ENCODE measurements at regions of chr12 and their contacts with region 1.

Region 1: GRCh38 chr12:108722992-108723766 is 8.1 kb downstream of the CORO1C start:
- DNase-seq: peak; percentile 94

Region 2: DNA sequence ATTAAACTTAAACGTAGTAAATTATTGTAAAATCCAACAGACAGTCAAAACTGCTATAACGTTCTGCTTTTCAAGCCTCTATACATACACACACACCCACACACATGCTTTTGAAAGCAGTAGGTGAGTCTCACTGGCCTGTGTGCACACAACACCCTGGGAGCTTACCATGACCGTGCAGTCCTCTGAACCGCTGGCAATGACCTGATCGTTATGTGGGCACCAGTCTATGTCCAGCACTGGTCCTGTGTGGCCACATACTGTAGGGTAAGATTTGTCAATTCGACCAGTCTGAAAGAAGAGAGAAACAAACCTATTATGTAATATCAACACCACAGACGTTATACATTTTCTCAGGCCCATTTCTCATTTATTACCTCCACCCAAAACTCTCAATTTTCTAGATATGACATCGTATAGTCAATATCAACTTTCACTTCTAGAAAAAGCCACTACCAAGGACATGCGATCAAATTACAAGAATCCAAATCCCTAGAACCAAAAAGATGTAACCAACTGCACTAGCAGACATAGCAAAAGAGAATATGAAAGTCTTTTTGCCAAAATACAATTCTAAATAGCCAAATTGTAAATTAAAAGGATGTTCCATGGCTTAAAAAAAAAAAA is 45.0 kb before region 1 on chr12:
- in situ Hi-C with region 1: loop called (anchors 10 kb)
- DNase-seq: no peak

Region 3: GRCh38 chr12:108826101-108826806 is 103.1 kb after region 1 on chr12:
- in situ Hi-C with region 1: no loop called
- DNase-seq: peak; percentile 90